Activated CD4-positive, alpha-beta memory T cell treated with anti-CD3 and anti-CD28 coated beads for 36 hours (primary cell): ENCODE measurements at regions of chr20 and their contacts with region 1.

Region 1: DNA sequence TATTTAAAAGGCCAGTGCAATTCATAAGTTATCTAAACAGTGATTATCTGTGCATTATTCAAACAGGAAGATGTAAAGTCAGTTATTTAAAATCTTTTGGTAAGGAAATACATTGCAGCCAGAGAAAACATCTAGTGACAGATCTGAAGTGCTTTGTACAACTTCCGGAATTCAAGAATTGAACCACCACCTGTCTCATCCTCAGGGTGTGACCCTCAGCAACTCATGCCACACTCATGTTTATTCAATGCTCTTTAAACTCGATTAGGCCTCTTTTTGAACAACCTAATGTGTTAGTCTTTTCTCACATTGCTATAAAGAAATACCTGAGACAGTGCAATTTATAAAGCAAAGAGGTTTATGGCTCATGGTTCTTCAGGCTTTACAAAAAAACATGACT is 62.6 kb upstream of the GGTLC1 start:
- DNase-seq: no peak
- H3K4me3 Mint-ChIP-seq: no peak overlapping the region
- H3K27ac Mint-ChIP-seq: peak overlapping the region; percentile 20
- H3K4me1 Mint-ChIP-seq: peaks cover 42% of the 10 kb centered on the region
- H3K27me3 Mint-ChIP-seq: peaks cover under 1% of the 10 kb centered on the region

Region 2: DNA sequence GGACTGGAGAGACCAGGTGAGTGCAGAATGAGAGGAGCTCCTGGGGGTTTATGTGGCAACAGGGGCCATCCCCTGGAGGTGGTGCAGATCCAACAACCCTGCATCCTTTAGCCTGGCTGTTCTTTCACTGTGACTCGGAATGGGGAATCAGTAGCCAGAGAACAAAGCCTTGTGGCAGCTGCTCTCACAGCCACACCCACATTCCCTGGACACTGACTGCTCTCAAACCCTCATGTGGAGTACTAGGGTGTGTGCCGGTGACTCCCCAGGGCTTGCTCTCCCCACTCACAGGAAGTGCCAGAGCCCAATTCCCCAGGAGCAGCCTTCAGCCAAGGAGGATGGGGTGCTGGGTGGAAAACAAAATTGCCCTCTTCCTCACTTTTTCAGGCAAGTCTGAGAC is 32.4 kb before region 1 on chr20:
- CTCF ChIA-PET with region 1: no interaction called
- POLR2A ChIA-PET with region 1: interaction called, 5 read pairs
- intact Hi-C with region 1: loop called (anchors 5 kb)
- DNase-seq: no peak
- H3K4me3 Mint-ChIP-seq: no peak overlapping the region
- H3K27ac Mint-ChIP-seq: no peak overlapping the region
- H3K4me1 Mint-ChIP-seq: peaks cover 5% of the 10 kb centered on the region
- H3K27me3 Mint-ChIP-seq: peaks cover 5% of the 10 kb centered on the region

Region 3: GRCh38 chr20:24039196-24039595 is 12.0 kb before region 1 on chr20:
- CTCF ChIA-PET with region 1: no interaction called
- POLR2A ChIA-PET with region 1: no interaction called
- intact Hi-C with region 1: no loop called
- DNase-seq: no peak
- H3K4me3 Mint-ChIP-seq: no peak overlapping the region
- H3K27ac Mint-ChIP-seq: no peak overlapping the region
- H3K4me1 Mint-ChIP-seq: peaks cover 6% of the 10 kb centered on the region
- H3K27me3 Mint-ChIP-seq: no peaks in the 10 kb centered on the region